Motor neuron (in vitro differentiated cells): ENCODE measurements at regions of chr4 and their contacts with region 1.

Region 1: DNA sequence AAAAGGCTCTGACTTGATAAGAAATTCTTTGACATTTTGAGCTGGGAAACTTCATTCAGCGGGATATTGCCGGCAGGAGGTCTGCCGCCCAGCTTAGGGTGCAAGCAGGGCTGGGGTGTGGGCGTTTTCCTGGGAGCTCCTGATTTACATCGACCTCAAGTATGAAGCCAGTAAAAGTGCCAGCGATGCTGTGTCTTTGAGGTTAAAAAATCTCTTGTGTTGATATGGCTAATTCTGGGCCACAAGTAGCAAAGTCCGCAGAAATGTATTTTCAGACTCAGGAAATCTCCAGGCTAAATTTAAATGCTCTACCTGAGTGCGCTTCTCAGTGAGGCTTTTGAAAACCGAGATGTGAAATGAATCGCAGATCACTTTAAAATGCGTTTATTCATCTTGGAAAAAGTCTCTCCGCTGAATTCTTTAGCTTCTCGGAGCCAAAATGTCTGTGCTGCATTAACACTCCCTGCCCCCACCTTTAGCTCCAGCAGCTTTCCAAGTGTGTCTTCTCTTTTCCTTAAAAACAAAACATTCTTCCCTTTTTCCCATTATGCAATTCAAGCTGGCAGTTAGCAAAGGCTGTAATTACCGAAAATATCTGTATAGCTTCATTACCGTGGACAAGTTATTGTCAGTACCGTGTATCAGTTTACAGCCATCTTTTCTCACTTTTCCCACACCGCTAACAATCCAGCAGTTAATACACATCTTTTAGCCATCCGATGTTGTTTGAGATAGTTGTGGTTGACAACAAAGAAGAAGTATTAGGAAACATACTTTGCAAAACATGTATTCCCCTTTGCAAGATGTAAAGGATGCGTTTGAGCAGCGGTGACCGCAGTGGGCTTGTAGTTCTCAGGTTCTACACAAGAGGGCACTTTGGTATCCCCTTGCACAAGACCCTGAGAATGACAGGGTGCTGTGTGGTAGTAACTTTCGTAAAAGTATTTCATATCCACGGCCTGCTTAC is 136.0 kb upstream of the STX18 start:
- ATAC-seq: peak in 3 of 8 experiments; percentile 88 to 93 (median 93)
- H3K4me3 ChIP-seq: no peak overlapping the region
- H3K27ac ChIP-seq: no peak overlapping the region
- H3K4me1 ChIP-seq: peaks cover 4% of the 10 kb centered on the region in 2 donors

Region 2: DNA sequence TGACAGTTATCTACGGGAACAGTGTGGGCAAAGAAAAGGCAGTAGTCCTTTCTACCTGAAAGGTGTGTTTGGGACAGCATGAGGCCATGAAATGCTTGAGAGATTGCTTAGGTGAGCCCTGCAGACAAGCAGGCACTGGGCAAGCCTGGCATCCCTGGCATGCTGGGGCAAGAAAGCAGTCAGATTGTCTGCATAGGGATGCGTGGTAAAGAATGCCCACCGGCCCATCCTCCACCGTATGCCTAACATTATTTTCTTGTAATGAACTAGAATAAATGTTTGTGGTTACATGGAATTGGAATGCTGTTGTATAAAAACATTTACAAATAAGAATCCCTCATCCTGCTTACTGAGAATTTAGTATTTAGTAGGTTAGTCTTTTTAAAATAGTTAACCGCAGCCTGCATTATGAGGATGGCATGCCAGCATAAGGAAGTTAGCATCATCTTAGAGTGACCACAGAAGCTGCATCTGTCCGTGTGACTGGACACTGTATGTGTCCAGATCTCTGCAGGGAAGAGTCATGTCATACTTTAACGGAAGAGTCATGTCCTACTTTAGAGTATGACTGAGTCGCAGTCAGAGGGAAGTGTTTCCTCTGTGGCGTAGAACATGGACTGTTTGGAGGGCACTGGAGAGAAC is 368.9 kb before region 1 on chr4:
- in situ Hi-C with region 1: no loop called
- ATAC-seq: peak in 1 of 8 experiments; percentile 21
- H3K4me3 ChIP-seq: no peak overlapping the region
- H3K27ac ChIP-seq: no peak overlapping the region
- H3K4me1 ChIP-seq: no peaks in the 10 kb centered on the region

Region 3: DNA sequence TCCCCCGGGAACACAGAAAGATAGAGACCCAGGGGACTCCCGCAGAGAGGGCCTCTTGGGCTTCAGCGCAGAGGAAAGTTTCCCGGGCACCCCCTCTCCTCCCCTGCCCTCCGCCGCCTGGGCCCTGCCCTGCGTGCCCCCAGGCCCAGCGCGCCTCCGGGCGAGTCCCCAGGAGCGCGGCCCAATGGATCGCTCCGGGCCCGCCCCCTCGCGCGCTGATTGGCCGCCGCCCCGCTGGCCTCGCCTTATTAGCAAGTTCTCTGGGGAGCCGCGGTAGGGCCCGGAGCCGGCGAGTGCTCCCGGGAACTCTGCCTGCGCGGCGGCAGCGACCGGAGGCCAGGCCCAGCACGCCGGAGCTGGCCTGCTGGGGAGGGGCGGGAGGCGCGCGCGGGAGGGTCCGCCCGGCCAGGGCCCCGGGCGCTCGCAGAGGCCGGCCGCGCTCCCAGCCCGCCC is 181.6 kb after region 1 on chr4 and contains the start of gene MSX1:
- in situ Hi-C with region 1: loop called in 1 of 9 experiments (anchors 25 kb)
- ATAC-seq: peak; percentile 86 to 95 (median 92)
- H3K4me3 ChIP-seq: peak within 1 kb of the TSS; percentile 29 to 58 (median 42)
- H3K27ac ChIP-seq: no peak within 1 kb of the TSS
- H3K4me1 ChIP-seq: peaks cover 17 to 20% of the 10 kb centered on the region in 2 donors
- total RNA-seq, gene MSX1: 1.1 to 52.3 (median 5.0) TPM

Region 4: DNA sequence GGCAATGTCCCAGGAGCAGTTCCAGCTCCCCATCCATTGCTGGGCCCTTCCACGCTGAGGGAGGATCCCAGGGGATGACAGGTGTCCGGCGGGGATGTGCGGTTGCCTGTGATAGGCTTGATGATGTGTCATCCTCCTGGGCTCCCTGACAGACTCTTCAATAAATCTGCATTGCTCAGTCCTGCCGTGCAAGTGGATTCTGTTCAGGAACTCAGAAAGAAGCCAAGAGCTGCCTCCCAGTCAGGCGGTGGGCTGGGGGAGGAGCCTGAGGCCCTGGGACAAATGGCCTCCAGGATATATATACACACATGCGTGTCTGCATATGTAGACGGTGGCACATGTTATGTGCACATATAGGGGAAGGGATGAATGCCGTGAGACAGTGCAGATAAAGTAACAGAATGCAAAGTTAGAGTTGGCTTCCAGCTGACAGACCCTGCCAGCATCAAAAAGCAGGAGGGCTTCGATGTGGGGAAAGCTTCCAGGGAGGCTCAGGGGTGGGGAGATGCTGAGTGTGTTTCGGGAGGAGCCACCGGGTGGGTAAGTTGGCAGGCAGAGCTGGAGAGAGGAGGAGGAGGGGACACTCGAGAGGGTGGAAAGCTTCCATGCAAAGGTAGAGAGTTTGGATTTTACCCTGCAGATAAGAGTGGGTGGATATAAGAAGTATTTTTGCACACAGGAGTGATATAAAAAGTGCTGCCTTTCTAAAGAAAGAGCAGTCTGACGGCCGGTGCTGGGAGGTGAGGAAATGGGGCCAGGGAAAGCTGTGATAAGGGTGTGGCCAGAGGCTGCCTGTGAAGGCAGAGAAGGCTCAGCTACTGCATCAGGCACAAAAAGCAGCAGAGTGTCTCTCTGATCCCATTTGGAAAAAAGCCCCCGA is 1243.5 kb after region 1 on chr4:
- in situ Hi-C with region 1: no loop called
- ATAC-seq: peak; percentile 73 to 91 (median 84)
- H3K4me3 ChIP-seq: no peak overlapping the region
- H3K27ac ChIP-seq: peak overlapping the region; percentile 43 to 68
- H3K4me1 ChIP-seq: peaks cover 65 to 70% of the 10 kb centered on the region in 2 donors